ENCODE measurements at regions of chr17 and their contacts with region 1.

Region 1: GRCh38 chr17:59762513-59763374 is 55.3 kb downstream of the VMP1 start:
- DNase-seq: peak in 1 of 2 experiments; percentile 59
- ATAC-seq: 0 out of 6 replicates have a peak, but pooled peaks of 1 of the 2 experiments have one; percentile 12
- H3K4me3 ChIP-seq: no peak overlapping the region
- H3K27ac ChIP-seq: peak overlapping the region; percentile 94 to 95
- H3K4me1 ChIP-seq: peaks cover 56% of the 10 kb centered on the region
- CTCF ChIP-seq: no peak
- EP300 ChIP-seq: no peak
- POLR2A ChIP-seq: no peak
- RAD21 ChIP-seq: no peak

Region 2: DNA sequence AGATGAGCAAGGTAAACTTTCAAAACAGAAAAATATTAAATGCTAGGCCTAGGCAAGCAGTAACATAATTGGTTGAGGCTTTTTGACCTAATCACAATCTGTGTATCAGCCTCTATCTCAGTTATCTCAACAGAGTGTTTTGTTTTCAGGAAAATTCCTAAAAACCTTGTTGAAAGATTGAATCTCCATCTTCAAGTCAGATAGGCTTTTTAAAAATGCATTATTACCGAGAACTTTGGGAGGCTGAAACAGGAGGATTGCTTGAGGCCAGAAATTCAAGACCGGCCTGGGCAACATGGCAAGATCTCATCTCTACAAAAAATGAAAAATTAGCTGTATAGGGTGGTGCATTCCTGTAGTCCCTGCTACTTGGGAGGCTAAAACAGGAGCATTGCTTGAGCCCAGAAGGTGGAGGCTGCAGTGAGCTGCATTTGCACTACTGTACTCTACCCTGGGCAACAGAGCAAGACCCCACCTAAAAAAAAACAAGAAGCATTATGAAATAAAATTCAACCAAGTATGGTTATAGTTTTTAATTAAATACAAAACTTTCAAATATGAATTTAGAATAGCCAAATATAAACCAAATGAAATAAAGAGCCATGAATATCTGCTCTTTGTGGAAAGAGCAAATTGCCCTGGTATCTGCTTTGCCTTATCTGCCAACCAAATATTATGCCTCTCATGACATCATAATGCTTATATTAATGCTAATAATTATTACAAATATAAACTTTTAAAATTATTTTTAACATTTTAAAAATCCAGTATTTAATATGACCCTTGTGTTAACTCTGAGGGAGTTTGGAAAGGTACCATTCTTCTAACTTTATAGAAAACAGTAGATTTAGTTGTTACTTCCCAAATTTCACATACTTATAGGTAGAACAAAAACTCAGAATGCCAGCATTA is 13.2 kb after region 1 on chr17:
- CTCF ChIA-PET with region 1: interaction called, 10 read pairs
- POLR2A ChIA-PET with region 1: no interaction called
- DNase-seq: no peak
- ATAC-seq: no peak
- H3K4me3 ChIP-seq: no peak overlapping the region
- H3K27ac ChIP-seq: peak overlapping the region; percentile 66 to 84; a peak in 5 of 6 replicates
- H3K4me1 ChIP-seq: peaks cover 42% of the 10 kb centered on the region
- CTCF ChIP-seq: no peak
- EP300 ChIP-seq: no peak
- POLR2A ChIP-seq: no peak
- RAD21 ChIP-seq: no peak